A673 (cell line): ENCODE measurements at regions of chr1 and their contacts with region 1.

Region 1: DNA sequence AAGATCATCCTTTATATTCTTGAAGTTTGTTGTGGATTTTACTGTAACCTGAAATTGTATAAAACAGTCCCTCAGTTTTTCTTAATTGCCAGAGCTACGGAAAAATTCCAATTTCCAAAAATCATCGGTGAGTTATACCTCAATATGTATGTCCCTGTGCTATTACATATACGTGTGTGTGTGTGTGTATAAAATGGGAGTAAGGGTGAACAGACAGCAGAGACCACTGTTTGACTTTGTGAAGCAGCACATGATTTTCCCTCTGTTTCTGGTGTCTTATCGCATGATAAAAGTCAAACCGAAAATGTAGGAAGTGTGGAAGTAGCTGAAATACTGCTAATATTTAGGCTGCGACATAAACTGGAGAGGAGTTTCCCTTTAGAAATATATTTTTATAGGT is 1.2 kb downstream of the OR2T1 start:
- DNase-seq: peak; percentile 30
- H3K4me3 ChIP-seq: no peak overlapping the region
- H3K27ac ChIP-seq: no peak overlapping the region
- H3K4me1 ChIP-seq: no peaks in the 10 kb centered on the region
- H3K27me3 ChIP-seq: no peaks in the 10 kb centered on the region
- CTCF ChIP-seq: peak; percentile 44

Region 2: DNA sequence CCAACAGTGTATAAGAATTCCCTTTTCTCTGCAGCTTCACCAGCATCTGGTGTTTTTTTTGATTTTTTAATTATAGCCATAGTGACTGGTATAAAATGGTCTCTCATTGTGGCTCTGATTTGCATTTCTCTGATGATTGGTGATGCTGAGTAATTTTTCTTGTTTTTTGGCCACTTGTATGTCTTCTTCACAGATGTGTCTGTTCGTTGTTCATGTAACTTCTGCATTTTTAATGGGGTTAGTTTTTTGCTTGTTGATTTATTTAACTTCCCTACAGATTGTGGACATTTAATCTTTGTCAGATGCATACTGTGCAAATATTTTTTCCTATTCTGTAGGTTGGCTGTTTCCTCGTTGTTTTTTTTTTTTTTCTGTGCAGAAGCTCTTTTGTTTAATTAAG is 411.0 kb before region 1 on chr1:
- CTCF ChIA-PET with region 1: no interaction called
- POLR2A ChIA-PET with region 1: no interaction called
- intact Hi-C with region 1: no loop called
- DNase-seq: no peak
- H3K4me3 ChIP-seq: no peak overlapping the region
- H3K27ac ChIP-seq: no peak overlapping the region
- H3K4me1 ChIP-seq: no peaks in the 10 kb centered on the region
- H3K27me3 ChIP-seq: no peaks in the 10 kb centered on the region
- CTCF ChIP-seq: no peak

Region 3: GRCh38 chr1:248611883-248612414 is 207.9 kb after region 1 on chr1:
- CTCF ChIA-PET with region 1: interaction called, 3 read pairs
- POLR2A ChIA-PET with region 1: no interaction called
- intact Hi-C with region 1: loop called (anchors 1 kb)
- DNase-seq: peak; percentile 50
- H3K4me3 ChIP-seq: no peak overlapping the region
- H3K27ac ChIP-seq: no peak overlapping the region
- H3K4me1 ChIP-seq: no peaks in the 10 kb centered on the region
- H3K27me3 ChIP-seq: no peaks in the 10 kb centered on the region
- CTCF ChIP-seq: peak; percentile 46

Region 4: DNA sequence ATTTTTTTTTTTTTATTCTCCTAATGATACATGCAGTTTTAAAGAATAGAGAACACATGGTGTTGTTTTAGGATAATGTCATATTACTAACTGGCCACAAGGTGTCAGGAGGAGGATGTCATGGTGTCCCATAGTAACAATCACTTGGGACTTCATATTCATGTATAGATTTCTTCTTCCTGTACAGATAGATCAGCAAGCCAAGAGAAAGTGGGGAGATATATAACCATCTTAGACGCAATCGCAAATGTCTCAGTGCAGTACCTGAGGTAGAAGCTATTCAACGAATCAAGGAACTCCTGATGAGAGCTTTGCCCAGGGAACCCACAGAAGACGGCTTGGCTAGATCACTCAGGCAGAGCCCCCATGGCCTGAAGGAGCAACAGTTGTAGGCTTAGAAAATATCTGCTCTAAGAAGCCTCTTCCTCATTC is 218.6 kb after region 1 on chr1:
- CTCF ChIA-PET with region 1: no interaction called
- POLR2A ChIA-PET with region 1: no interaction called
- intact Hi-C with region 1: loop called (anchors 2 kb)
- DNase-seq: peak; percentile 74
- H3K4me3 ChIP-seq: no peak overlapping the region
- H3K27ac ChIP-seq: no peak overlapping the region
- H3K4me1 ChIP-seq: peaks cover 21% of the 10 kb centered on the region
- H3K27me3 ChIP-seq: no peaks in the 10 kb centered on the region
- CTCF ChIP-seq: peak; percentile 70

Region 5: DNA sequence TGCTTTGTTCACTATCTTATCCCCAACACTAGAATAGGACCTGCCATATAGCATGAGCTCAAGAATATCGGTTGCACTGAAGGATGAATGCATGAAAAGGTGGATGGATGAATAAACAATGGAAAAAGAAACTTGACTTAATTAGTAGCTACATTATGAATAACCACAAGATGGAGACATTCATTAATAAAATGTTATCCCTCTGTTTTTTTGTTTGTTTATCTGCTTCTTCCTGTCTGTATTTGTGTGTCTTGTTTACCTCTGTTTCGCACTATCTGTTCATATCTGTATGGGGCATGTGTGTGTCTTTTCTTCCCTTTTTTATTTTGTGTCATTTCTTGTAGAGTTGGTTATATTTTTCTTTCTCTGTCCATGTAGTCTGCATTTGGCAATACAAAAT is 299.6 kb after region 1 on chr1:
- CTCF ChIA-PET with region 1: no interaction called
- POLR2A ChIA-PET with region 1: no interaction called
- intact Hi-C with region 1: loop called (anchors 2 kb)
- DNase-seq: no peak
- H3K4me3 ChIP-seq: no peak overlapping the region
- H3K27ac ChIP-seq: no peak overlapping the region
- H3K4me1 ChIP-seq: peaks cover 5% of the 10 kb centered on the region
- H3K27me3 ChIP-seq: peaks cover 7% of the 10 kb centered on the region
- CTCF ChIP-seq: peak; percentile 33; the same call in 1 of the 2 replicates

Region 6: GRCh38 chr1:248807067-248807737 is 403.2 kb after region 1 on chr1:
- CTCF ChIA-PET with region 1: no interaction called
- POLR2A ChIA-PET with region 1: no interaction called
- intact Hi-C with region 1: loop called (anchors 1 kb)
- DNase-seq: peak; percentile 52
- H3K4me3 ChIP-seq: no peak overlapping the region
- H3K27ac ChIP-seq: no peak overlapping the region
- H3K4me1 ChIP-seq: no peaks in the 10 kb centered on the region
- H3K27me3 ChIP-seq: peaks cover 3% of the 10 kb centered on the region
- CTCF ChIP-seq: peak; percentile 81